ENCODE measurements at regions of chr6 and their contacts with region 1.

Region 1: DNA sequence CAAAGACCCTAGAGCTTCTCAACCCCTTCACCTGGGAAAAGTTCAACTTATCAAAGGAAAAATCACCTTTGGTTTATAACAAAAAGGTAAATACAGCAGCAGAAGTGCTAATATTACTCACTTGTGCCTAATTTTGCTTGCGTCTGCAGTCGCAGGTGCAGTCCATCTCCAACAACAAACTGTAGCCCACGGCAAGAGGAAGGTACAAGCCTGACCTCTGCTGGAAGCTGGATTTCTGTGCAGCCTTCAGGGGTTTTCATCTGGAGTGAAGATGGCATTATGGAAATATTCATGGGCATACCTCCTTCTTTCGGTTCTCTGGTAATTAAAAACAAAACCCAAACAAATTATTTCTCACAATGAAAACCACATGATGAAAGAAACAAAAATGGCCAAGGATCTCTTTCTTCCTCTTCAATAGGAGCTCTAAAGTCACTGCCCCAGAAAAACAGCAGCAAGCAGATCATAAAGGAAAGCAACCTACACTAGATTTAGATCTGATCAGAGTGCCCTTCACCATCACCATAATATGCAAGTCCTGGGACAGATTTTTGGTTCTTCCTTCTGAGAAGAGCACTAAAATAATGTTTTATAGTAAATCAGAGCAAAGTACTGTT is 7.8 kb downstream of the UBE3D start:
- DNase-seq: no peak
- ATAC-seq: peak; percentile 67 to 71
- H3K4me3 ChIP-seq: no peak overlapping the region
- H3K27ac ChIP-seq: no peak overlapping the region
- H3K4me1 ChIP-seq: no peaks in the 10 kb centered on the region
- H3K27me3 ChIP-seq: no peaks in the 10 kb centered on the region

Region 2: DNA sequence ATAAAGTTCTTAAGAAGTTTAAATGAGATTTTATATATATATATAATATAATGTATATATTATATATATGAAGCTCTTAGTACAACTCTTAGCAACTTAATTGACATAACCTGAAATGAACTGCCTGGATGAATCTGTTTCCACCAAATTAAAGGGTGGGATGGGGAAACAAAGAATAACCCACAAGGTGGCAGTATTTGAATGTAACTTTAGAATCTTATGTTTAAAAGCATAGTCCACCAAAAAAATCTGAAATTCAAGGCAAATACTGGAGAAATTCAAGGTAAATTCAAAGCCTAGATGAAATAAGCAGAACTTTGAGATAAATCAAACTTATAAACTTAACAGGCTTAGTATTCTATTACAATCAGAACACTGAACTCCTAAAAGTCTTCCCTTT is 805.9 kb before region 1 on chr6:
- intact Hi-C with region 1: loop called in 2 of 4 experiments (anchors 2 to 5 kb)
- DNase-seq: no peak
- ATAC-seq: no peak
- H3K4me3 ChIP-seq: no peak overlapping the region
- H3K27ac ChIP-seq: no peak overlapping the region
- H3K4me1 ChIP-seq: no peaks in the 10 kb centered on the region
- H3K27me3 ChIP-seq: no peaks in the 10 kb centered on the region

Region 3: GRCh38 chr6:82270881-82271645 is 786.8 kb before region 1 on chr6:
- intact Hi-C with region 1: loop called in 3 of 4 experiments (anchors 5 kb)
- DNase-seq: no peak
- ATAC-seq: peak in 1 of 2 donors; percentile 46
- H3K4me3 ChIP-seq: no peak overlapping the region
- H3K27ac ChIP-seq: no peak overlapping the region
- H3K4me1 ChIP-seq: no peaks in the 10 kb centered on the region
- H3K27me3 ChIP-seq: no peaks in the 10 kb centered on the region

Region 4: DNA sequence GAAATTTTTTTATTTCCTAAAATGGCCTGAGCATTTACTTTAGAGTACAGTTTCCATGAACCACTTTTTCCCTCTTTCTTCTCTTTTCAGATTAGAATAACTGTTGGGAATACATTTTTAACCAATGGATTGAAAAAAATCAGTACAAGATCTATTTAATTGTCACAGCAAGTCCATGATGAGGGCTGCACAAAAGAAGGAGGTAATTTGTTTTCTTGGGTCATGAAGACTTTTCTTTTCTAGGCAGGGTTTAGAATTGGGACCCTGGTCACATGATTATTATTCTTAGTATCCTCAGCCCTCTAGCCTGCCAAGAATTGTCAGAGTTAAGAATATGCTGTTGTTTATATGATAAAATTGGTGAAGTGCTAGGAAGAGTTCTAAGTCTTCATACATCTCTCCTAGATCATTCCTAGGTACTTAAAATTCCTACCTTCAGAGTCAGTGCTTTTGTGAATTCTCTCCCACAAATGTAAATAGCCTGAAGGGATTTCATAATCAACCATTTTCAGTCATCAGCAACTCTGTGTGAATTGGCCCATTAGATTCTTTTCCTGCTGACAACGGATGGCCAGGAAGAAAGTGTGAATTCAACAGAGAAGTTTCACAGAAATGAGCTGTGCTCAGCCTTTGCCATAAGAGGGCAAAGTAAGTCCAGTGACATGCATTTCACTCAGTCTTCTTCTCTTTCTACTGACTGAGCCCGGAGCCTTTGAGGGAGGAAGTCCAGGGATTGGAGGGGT is 726.6 kb before region 1 on chr6:
- intact Hi-C with region 1: loop called in 1 of 4 experiments (anchors 5 kb)
- DNase-seq: no peak
- ATAC-seq: no peak
- H3K4me3 ChIP-seq: no peak overlapping the region
- H3K27ac ChIP-seq: no peak overlapping the region
- H3K4me1 ChIP-seq: no peaks in the 10 kb centered on the region
- H3K27me3 ChIP-seq: no peaks in the 10 kb centered on the region

Region 5: DNA sequence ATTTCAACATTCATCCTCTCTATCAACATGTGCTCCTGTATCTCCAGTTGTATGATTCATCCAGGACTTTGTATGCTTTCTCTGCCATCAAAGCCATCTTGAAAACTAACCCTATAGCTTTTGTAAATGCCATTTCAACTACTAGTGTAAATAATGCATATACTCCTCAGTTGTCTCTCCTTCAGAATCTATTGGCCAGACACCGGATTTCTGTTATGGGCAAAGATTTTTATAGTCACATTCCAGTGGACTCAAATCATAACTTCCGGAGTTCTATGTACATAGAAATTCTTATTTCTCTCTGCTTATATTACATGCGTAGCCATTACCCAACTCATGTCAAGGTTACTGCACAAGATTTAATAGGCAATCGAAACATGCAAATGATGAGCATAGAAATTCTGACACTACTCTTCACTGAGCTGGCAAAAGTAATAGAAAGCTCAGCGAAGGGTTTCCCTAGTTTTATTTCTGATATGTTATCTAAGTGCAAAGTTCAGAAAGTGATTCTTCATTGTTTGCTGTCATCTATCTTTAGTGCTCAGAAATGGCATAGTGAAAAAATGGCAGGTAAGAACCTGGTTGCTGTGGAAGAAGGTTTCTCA is 80.4 kb after region 1 on chr6:
- intact Hi-C with region 1: no loop called
- DNase-seq: no peak
- ATAC-seq: no peak
- H3K4me3 ChIP-seq: no peak overlapping the region
- H3K27ac ChIP-seq: no peak overlapping the region
- H3K4me1 ChIP-seq: no peaks in the 10 kb centered on the region
- H3K27me3 ChIP-seq: no peaks in the 10 kb centered on the region

Region 6: DNA sequence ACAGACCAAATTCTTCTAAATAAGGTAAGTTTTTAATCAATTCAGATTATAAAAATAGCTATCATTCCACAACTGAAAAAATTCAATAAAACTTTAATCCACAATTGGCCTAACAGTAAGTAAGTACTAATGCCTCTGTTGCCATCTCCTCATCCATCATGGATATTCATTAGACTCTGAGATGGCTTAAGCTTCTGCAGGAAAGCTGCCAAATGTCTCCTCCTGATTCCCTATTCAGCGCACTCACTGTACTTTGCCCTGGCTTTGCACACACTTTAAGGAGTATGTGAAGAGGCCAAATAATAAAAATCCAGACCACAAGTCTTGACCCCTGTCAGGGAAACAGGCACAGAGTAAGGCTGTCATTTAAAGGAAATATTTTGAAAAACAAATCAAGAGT is 111.7 kb after region 1 on chr6:
- intact Hi-C with region 1: no loop called
- DNase-seq: no peak
- ATAC-seq: no peak
- H3K4me3 ChIP-seq: no peak overlapping the region
- H3K27ac ChIP-seq: no peak overlapping the region
- H3K4me1 ChIP-seq: no peaks in the 10 kb centered on the region
- H3K27me3 ChIP-seq: no peaks in the 10 kb centered on the region

Region 7: DNA sequence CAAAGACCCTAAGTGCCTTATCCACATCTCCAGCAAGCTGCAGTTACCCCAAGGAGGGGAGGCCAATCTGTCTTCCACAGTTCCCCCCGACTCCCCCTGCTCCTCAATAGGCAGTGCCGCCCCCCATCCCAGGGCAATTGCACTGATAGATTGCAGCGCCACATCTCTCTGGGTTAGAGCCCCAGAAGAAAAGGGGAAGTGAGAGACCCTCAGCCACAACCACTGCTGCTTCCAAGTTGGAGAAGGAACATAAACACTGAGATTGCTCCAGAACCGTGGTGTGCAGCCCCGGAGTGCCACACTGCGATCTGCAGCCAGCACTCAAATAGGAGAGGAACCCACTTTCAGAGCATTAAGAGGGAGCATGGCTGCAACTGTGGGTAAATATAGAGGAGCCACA is 236.9 kb after region 1 on chr6:
- intact Hi-C with region 1: no loop called
- DNase-seq: no peak
- ATAC-seq: peak in 1 of 2 donors; percentile 54
- H3K4me3 ChIP-seq: no peak overlapping the region
- H3K27ac ChIP-seq: no peak overlapping the region
- H3K4me1 ChIP-seq: no peaks in the 10 kb centered on the region
- H3K27me3 ChIP-seq: no peaks in the 10 kb centered on the region

Region 8: DNA sequence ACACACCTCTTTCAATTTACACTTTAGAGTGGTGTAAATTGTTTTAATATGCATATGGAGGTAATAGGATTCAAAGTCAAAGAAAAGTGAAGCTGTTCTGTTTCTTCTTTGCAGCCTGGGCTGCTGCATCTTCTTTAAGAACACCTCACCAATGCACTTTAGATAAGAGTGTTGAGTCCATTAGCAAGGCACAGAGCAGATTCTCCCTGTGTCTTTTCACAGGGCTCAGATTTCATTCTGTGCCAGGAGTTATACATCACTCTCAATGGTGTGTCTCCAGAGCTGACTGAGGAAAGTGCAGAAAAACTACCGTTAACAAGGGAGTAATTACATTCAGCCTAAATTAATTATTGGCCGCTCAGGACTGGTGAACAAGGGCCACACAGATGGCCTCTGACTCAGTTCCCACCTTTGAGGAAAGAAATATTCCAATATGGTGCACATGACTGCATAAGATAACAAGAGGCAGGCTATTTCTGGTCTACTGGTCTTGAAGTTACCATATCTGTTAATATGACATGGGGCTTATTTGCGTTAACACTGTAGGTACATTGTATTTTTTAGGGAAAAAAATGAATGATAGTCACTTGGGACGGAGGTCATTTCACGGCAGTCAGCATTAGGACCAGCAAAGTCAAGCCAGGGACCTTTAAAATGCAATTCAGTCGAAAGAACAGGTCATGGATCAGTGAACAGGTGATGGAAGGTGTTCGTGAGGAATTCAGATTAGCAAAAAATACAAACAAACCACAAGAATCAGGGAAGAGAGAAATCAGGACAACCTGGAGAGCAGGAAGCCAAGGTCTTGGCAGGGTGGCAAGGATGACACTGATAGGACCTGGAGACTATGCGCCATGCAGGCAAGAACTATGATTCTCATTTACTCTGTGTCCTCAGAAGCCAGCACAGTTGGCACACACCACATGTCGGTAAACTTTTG is 1502.9 kb after region 1 on chr6:
- intact Hi-C with region 1: no loop called
- DNase-seq: no peak
- ATAC-seq: no peak
- H3K4me3 ChIP-seq: no peak overlapping the region
- H3K27ac ChIP-seq: no peak overlapping the region
- H3K4me1 ChIP-seq: no peaks in the 10 kb centered on the region
- H3K27me3 ChIP-seq: no peaks in the 10 kb centered on the region